ENCODE measurements at regions of chr6 and their contacts with region 1.

Region 1: DNA sequence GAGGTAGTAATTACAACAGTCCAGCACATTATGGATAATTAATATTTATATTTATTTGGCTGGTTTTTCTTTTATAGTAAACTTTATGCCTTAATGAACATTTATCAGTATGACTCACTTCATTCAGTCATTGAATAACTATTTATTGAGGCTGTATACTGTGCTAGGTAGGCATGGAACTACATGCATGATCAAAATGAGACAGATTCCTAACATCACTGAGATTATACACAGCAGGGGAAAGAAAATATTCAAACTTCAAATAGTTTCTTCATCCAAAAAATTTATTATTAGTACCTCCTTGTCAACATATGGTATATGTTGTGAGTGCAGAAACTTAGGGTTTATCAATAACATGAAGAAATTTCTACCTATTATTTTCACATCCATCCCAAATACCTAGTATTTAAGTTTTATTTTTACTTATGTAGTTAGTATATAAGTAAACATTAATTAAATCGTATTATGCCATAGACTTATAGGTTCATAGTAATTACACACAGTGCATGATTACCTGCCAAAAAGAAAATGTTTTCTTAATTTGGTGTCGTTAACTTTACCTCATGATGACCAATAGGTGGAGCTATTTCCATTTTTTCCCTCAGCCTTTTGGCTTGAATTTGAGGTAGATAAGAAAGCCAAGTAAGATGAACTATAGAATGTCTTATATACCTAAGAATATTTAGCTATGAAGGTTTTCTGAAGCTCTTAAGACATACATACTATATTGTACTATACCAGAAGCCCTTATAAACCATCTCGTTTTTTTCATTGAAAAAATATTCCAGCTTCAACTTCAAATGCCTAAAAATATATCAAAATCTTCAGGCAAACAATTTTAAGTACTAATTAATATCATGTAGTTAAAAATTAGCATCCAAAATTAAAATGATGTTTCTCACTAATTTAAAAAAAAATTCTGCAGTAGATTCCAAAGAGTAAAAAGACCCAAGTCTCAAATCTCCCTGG is 12.5 kb upstream of the TMEM30A start:
- DNase-seq: no peak
- ATAC-seq: peak; percentile 42
- H3K4me3 Mint-ChIP-seq: no peak overlapping the region
- H3K27ac Mint-ChIP-seq: no peak overlapping the region
- H3K4me1 Mint-ChIP-seq: no peaks in the 10 kb centered on the region
- H3K27me3 Mint-ChIP-seq: no peaks in the 10 kb centered on the region

Region 2: DNA sequence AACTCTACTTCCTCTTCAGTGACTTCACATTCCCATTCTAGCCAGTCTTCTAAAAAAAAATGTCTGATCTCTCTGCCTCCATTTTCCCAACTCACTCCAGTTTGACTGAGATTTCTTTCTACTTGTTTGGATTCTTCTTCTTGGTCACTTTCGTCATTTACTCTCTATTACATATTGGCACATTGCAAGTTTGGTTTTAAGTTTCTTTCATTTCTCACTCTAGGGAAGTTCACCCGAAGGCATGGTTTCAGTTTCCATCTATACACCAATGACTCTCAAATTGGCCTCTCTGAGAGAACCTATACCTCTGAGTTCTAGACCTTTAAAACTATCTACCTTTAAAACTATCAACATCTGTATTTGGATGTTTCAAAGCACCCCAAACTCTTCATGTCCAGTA is 1549.8 kb before region 1 on chr6:
- CTCF ChIA-PET with region 1: no interaction called
- POLR2A ChIA-PET with region 1: no interaction called
- intact Hi-C with region 1: no loop called
- DNase-seq: no peak
- ATAC-seq: peak; percentile 94
- H3K4me3 Mint-ChIP-seq: no peak overlapping the region
- H3K27ac Mint-ChIP-seq: no peak overlapping the region
- H3K4me1 Mint-ChIP-seq: no peaks in the 10 kb centered on the region
- H3K27me3 Mint-ChIP-seq: no peaks in the 10 kb centered on the region

Region 3: GRCh38 chr6:75546381-75546780 is 249.3 kb after region 1 on chr6:
- CTCF ChIA-PET with region 1: interaction called, 7 read pairs
- POLR2A ChIA-PET with region 1: no interaction called
- intact Hi-C with region 1: loop called (anchors 5 kb)
- DNase-seq: no peak
- ATAC-seq: no peak
- H3K4me3 Mint-ChIP-seq: no peak overlapping the region
- H3K27ac Mint-ChIP-seq: no peak overlapping the region
- H3K4me1 Mint-ChIP-seq: peaks cover 4% of the 10 kb centered on the region
- H3K27me3 Mint-ChIP-seq: peaks cover 4% of the 10 kb centered on the region

Measured in activated CD4-positive, alpha-beta T cell treated with anti-CD3 and anti-CD28 coated beads for 36 hours (primary cell).